ENCODE measurements at regions of chr16 and their contacts with region 1.

Region 1: GRCh38 chr16:19886073-19886941 is 1.7 kb upstream of the GPRC5B start:
- DNase-seq: peak; percentile 76
- H3K4me3 Mint-ChIP-seq: peak overlapping the region; percentile 60
- H3K27ac Mint-ChIP-seq: no peak overlapping the region
- H3K4me1 Mint-ChIP-seq: peaks cover 4% of the 10 kb centered on the region
- H3K27me3 Mint-ChIP-seq: peaks cover 12% of the 10 kb centered on the region
- CTCF ChIP-seq: peak; percentile 98

Region 2: DNA sequence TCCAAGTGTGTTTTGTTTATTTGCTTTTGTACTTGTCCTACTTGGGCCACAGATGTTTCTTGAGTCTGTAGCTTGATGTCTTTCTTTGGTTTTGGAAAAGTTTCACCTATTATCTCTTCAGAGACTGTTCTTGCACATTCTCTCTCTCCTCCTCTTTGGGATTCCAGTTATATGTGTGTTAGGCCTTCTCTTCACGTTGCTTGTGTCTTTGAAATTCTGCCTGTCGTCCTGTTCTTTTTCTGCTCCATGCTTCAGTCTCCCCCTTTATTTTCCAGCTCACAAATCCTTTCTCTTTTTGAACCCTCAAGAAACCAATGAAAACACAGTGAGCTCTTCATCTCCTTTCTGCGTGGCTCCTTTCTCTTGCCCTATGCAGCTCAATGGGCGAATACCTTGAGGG is 322.9 kb before region 1 on chr16:
- CTCF ChIA-PET with region 1: interaction called, 23 read pairs
- POLR2A ChIA-PET with region 1: no interaction called
- intact Hi-C with region 1: loop called (anchors 1 kb)
- DNase-seq: no peak
- H3K4me3 Mint-ChIP-seq: no peak overlapping the region
- H3K27ac Mint-ChIP-seq: no peak overlapping the region
- H3K4me1 Mint-ChIP-seq: no peaks in the 10 kb centered on the region
- H3K27me3 Mint-ChIP-seq: no peaks in the 10 kb centered on the region
- CTCF ChIP-seq: no peak

Region 3: DNA sequence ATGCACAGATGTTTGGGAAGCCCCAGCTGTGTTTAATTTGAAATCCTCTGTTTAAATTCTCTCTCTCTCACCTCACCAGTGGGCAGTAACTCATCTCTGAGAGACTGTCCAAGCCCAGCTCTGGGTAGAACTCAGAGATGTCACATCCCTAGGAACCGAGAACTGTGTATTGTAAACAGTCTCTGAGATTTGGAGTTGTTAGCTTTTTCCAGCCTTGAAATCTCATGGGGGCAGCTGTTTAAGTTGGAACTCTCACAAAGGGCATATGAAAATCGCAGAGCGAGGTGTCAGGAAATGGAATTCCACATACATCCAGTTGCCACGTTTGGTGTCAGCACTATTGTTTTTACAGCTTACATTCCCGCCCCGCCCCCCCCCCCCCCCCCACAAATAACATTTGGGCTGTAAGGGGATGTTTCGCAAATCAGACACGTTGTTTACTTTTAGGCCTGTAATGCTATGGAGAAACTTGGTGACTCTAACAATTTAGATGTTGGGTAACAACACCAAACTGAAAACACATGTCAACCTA is 296.5 kb before region 1 on chr16:
- CTCF ChIA-PET with region 1: interaction called, 184 read pairs
- POLR2A ChIA-PET with region 1: no interaction called
- intact Hi-C with region 1: no loop called
- DNase-seq: peak; percentile 66
- H3K4me3 Mint-ChIP-seq: no peak overlapping the region
- H3K27ac Mint-ChIP-seq: peak overlapping the region; percentile 67
- H3K4me1 Mint-ChIP-seq: peaks cover 9% of the 10 kb centered on the region
- H3K27me3 Mint-ChIP-seq: no peaks in the 10 kb centered on the region
- CTCF ChIP-seq: no peak

Region 4: GRCh38 chr16:19696328-19696727 is 190.0 kb before region 1 on chr16:
- CTCF ChIA-PET with region 1: interaction called, 3 read pairs
- POLR2A ChIA-PET with region 1: no interaction called
- intact Hi-C with region 1: loop called (anchors 1 kb)
- DNase-seq: peak; percentile 87
- H3K4me3 Mint-ChIP-seq: peak overlapping the region; percentile 11
- H3K27ac Mint-ChIP-seq: peak overlapping the region; percentile 85
- H3K4me1 Mint-ChIP-seq: peaks cover 24% of the 10 kb centered on the region
- H3K27me3 Mint-ChIP-seq: no peaks in the 10 kb centered on the region
- CTCF ChIP-seq: no peak

Region 5: GRCh38 chr16:19898924-19899604 is 12.8 kb after region 1 on chr16:
- CTCF ChIA-PET with region 1: interaction called, 11 read pairs
- POLR2A ChIA-PET with region 1: interaction called, 3 read pairs
- intact Hi-C with region 1: no loop called
- DNase-seq: peak; percentile 73
- H3K4me3 Mint-ChIP-seq: no peak overlapping the region
- H3K27ac Mint-ChIP-seq: no peak overlapping the region
- H3K4me1 Mint-ChIP-seq: no peaks in the 10 kb centered on the region
- H3K27me3 Mint-ChIP-seq: no peaks in the 10 kb centered on the region
- CTCF ChIP-seq: peak; percentile 71

Measured in MCF 10A (cell line).